ENCODE measurements at regions of chr12 and their contacts with region 1.

Region 1: GRCh38 chr12:53005986-53006809 is at the start of gene EIF4B:
- DNase-seq: peak; percentile 95

Region 2: DNA sequence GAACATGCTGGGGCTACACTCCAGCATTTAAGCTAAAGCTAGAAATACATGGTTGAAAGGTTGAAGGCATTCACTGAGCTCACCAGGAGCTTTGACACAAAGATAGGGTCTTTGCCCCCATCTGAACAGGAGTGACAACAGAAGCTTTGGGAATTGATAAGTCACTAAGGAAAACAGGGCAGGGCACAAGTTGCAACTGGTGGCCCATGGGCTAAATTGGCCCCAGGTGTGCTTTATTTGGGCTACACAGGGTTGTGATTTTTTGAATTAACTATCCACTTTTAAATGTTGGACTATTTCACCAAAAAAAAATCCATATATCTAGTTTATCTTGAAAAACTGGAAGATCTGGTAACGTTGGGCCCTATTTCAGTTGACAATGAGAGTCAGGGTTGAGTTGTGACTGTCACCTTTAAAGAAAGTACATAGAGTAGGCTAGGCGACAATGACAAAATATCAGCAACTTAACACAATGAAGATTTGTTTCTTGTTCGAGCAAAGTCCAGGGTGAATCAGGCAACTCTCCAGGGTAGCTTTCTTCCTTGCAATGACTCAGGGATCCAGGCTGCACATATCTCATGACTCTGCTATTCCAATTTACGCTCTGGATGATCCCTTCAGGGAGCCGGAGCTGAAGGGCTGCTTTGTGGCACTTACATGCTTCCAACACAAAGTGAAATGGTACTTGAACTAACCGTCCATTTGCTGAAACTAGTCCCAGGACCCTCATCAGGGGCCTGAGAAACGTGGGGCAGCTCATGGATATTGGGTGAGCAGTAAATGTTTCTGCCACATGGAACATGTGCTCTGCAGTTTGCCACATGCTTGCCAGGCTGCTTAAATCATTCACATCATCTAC is 13.3 kb before region 1 on chr12:
- CTCF ChIA-PET with region 1: interaction called, 5 read pairs
- POLR2A ChIA-PET with region 1: interaction called, 17 read pairs
- DNase-seq: no peak

Region 3: GRCh38 chr12:53036802-53037201 is 30.6 kb after region 1 on chr12:
- CTCF ChIA-PET with region 1: no interaction called
- POLR2A ChIA-PET with region 1: interaction called, 12 read pairs
- DNase-seq: no peak

Region 4: GRCh38 chr12:53047221-53048042 is 41.2 kb after region 1 on chr12:
- CTCF ChIA-PET with region 1: no interaction called
- POLR2A ChIA-PET with region 1: interaction called, 21 read pairs
- DNase-seq: peak; percentile 70